IMR-90 (cell line): ENCODE measurements at regions of chr14 and their contacts with region 1.

Region 1: GRCh38 chr14:65958664-65959562 is 527.3 kb upstream of the CCDC196 start:
- DNase-seq: peak; percentile 18
- ATAC-seq: peak; percentile 65; the same call in 1 of the 2 replicates
- H3K4me3 ChIP-seq: no peak overlapping the region
- H3K27ac ChIP-seq: no peak overlapping the region
- H3K4me1 ChIP-seq: no peaks in the 10 kb centered on the region
- H3K27me3 ChIP-seq: no peaks in the 10 kb centered on the region
- CTCF ChIP-seq: peak; percentile 47
- POLR2A ChIP-seq: no peak
- RAD21 ChIP-seq: peak; percentile 42; the same call in 1 of the 2 replicates

Region 2: DNA sequence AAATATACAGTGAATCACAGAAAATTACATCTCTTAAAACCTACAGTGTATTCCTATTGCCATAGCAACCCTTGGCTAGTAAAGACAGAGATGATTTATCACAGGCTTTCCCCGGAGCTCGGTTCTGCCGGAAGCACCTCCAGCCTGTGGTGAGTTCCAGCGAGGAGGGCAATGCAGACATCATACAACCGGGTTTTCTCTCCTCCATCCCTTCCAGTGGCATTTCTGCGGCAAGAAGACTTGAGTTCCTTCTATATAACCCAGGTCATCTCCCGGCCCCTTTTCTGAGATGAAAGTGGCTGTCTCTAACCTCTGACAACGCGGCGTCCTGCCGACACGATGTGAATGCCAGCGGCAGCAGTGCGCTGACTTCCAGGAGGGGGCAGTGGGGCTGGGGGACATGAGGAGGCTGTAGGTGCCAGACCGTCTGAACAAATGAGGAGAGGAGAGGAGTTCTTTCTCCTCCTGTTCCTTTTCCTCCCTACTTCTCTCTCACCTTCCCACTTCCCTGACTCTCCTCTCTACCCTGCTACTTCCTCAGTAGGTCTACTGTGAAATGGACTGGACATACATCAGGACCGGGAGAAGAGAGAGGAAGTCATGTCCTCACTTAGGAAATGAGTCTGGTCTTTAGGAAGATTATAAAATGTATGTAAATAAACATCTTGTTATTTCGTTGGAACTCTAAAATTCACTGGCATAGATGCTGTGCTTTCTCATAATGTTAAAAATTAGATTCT is 788.0 kb before region 1 on chr14:
- CTCF ChIA-PET with region 1: interaction called, 3 read pairs
- POLR2A ChIA-PET with region 1: no interaction called
- dilution Hi-C with region 1: no loop called
- in situ Hi-C with region 1: loop called (anchors 5 kb)
- intact Hi-C with region 1: no loop called
- DNase-seq: peak; percentile 81
- ATAC-seq: peak; percentile 66
- H3K4me3 ChIP-seq: peak overlapping the region; percentile 33
- H3K27ac ChIP-seq: no peak overlapping the region
- H3K4me1 ChIP-seq: peaks cover 11% of the 10 kb centered on the region
- H3K27me3 ChIP-seq: no peaks in the 10 kb centered on the region
- CTCF ChIP-seq: peak; percentile 39
- POLR2A ChIP-seq: no peak
- RAD21 ChIP-seq: peak; percentile 33; the same call in 1 of the 2 replicates

Region 3: GRCh38 chr14:65287264-65288131 is 671.4 kb before region 1 on chr14:
- CTCF ChIA-PET with region 1: no interaction called
- POLR2A ChIA-PET with region 1: no interaction called
- dilution Hi-C with region 1: no loop called
- in situ Hi-C with region 1: no loop called
- intact Hi-C with region 1: loop called (anchors 5 kb)
- DNase-seq: no peak
- ATAC-seq: no peak
- H3K4me3 ChIP-seq: no peak overlapping the region
- H3K27ac ChIP-seq: no peak overlapping the region
- H3K4me1 ChIP-seq: peaks cover 3% of the 10 kb centered on the region
- H3K27me3 ChIP-seq: no peaks in the 10 kb centered on the region
- CTCF ChIP-seq: no peak
- POLR2A ChIP-seq: no peak
- RAD21 ChIP-seq: no peak

Region 4: DNA sequence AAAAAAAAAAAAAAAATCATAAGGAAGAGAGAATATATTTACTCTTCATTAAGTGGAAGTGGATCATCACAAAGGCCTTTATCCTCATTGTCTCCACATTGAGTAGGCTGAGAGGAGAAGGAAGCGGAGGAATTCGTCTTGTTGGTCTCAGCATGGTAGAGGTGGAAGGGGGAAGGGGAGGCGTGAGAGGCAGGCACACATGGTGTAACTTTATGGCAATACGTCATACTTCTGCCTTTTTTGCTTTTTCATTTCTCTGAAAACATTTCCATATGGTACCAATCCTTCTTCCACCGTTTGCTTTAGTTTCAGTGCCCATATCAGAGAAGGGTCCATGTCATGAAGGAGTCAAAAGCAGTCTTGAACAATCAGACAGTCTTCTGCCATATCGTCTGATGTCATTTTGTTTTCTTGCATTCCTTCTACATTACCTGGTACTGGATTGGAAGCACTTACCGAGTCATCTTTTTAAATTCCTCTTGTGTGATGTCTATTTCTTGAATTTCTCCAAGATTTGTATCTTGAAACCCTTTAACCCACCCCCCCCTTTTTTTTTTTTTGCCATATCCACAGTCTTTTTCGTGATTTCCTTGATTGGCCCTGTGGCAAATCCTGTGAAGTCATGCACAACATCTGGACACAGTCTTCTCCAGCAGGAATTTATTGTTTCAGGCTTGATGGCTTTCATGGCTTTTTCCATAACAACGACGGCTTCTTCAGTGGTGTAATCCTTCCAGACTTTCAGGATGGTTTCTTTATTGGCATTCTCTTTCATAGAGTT is 537.5 kb before region 1 on chr14:
- CTCF ChIA-PET with region 1: no interaction called
- POLR2A ChIA-PET with region 1: no interaction called
- dilution Hi-C with region 1: no loop called
- in situ Hi-C with region 1: loop called (anchors 10 kb)
- intact Hi-C with region 1: no loop called
- DNase-seq: peak; percentile 78
- ATAC-seq: peak; percentile 54
- H3K4me3 ChIP-seq: no peak overlapping the region
- H3K27ac ChIP-seq: no peak overlapping the region
- H3K4me1 ChIP-seq: peaks cover 5% of the 10 kb centered on the region; the same call in 1 of the 2 replicates
- H3K27me3 ChIP-seq: no peaks in the 10 kb centered on the region
- CTCF ChIP-seq: no peak
- POLR2A ChIP-seq: no peak
- RAD21 ChIP-seq: no peak

Region 5: DNA sequence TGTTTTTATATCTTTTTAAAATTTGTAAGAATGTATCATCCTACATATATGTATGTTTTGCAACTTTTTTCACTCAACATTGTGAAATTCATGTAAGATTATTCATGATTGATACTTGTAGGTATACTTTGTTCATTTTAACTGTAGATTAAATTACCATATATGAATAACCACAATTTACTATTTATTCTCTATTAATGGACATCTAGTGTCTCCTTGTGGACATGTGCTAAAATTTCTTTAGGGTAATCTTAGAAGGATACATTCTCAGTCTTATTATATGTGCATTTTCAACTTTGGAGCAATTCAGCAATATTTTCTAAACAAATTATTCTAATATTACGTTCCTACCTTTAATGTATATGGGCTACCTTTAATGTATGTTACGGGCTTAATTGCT is 354.0 kb before region 1 on chr14:
- CTCF ChIA-PET with region 1: no interaction called
- POLR2A ChIA-PET with region 1: no interaction called
- dilution Hi-C with region 1: no loop called
- in situ Hi-C with region 1: no loop called
- intact Hi-C with region 1: loop called (anchors 10 kb)
- DNase-seq: peak; percentile 13
- ATAC-seq: no peak
- H3K4me3 ChIP-seq: no peak overlapping the region
- H3K27ac ChIP-seq: no peak overlapping the region
- H3K4me1 ChIP-seq: no peaks in the 10 kb centered on the region
- H3K27me3 ChIP-seq: no peaks in the 10 kb centered on the region
- CTCF ChIP-seq: peak; percentile 44
- POLR2A ChIP-seq: no peak
- RAD21 ChIP-seq: peak; percentile 47

Region 6: DNA sequence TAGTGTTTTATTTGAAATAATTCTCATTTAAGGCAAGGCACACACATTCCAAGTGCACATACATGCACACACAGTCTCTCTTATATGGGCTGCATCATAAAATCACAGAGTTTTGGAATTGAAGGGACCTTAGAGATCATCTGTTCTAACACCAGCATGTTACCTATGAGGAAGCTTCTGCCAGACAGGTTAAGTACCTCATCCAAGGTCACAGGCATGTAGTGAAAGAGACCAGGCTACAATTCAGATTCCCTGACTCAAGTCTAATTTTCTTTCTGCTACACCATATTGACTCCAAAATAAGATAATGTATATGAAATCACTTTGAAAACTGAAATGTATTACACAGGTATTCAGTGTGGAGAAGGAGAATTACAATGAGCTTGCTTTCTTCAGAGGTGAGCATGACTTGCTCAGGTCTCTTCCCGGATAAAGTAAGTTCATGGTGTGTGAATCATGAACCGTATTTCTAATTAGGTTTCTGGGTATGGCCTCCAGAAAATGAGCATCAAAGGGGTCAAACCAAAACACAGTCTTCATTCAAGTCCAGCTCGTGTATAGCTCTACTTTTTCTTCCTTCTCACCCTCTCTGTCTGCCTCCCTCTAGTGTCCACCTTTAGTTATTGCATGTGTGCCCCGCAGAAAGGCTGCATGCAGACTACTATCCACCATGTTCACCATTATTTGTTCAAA is 134.5 kb before region 1 on chr14:
- CTCF ChIA-PET with region 1: interaction called, 3 read pairs
- POLR2A ChIA-PET with region 1: no interaction called
- dilution Hi-C with region 1: no loop called
- in situ Hi-C with region 1: no loop called
- intact Hi-C with region 1: loop called (anchors 10 kb)
- DNase-seq: peak; percentile 70
- ATAC-seq: peak; percentile 99
- H3K4me3 ChIP-seq: no peak overlapping the region
- H3K27ac ChIP-seq: no peak overlapping the region
- H3K4me1 ChIP-seq: no peaks in the 10 kb centered on the region
- H3K27me3 ChIP-seq: peaks cover 48% of the 10 kb centered on the region
- CTCF ChIP-seq: peak; percentile 86
- POLR2A ChIP-seq: no peak
- RAD21 ChIP-seq: peak; percentile 82

Region 7: DNA sequence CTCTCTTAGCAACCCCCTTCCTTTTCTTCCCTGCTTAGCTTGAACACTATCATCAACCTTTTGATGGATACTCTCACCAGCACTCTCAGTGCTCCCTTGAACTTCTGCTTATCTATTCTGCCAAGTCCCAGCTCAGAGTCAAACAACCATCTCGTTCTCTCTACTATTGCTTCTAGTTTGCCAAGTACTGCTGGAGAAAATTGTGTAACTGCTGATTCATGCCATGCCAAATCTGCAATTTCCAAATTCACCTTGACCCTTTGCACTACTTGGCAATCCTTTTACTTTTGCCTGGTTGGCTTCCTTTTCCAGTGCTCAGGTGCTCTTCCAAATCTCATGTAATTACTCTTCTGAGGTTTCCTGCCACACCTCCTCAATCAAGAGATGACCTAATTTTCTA is 524.4 kb after region 1 on chr14:
- CTCF ChIA-PET with region 1: no interaction called
- POLR2A ChIA-PET with region 1: no interaction called
- dilution Hi-C with region 1: no loop called
- in situ Hi-C with region 1: no loop called
- intact Hi-C with region 1: no loop called
- DNase-seq: no peak
- ATAC-seq: no peak
- H3K4me3 ChIP-seq: no peak overlapping the region
- H3K27ac ChIP-seq: no peak overlapping the region
- H3K4me1 ChIP-seq: no peaks in the 10 kb centered on the region
- H3K27me3 ChIP-seq: no peaks in the 10 kb centered on the region
- CTCF ChIP-seq: no peak
- POLR2A ChIP-seq: no peak
- RAD21 ChIP-seq: no peak